IMR-90 (cell line): ENCODE measurements at regions of chr3 and their contacts with region 1.

Region 1: DNA sequence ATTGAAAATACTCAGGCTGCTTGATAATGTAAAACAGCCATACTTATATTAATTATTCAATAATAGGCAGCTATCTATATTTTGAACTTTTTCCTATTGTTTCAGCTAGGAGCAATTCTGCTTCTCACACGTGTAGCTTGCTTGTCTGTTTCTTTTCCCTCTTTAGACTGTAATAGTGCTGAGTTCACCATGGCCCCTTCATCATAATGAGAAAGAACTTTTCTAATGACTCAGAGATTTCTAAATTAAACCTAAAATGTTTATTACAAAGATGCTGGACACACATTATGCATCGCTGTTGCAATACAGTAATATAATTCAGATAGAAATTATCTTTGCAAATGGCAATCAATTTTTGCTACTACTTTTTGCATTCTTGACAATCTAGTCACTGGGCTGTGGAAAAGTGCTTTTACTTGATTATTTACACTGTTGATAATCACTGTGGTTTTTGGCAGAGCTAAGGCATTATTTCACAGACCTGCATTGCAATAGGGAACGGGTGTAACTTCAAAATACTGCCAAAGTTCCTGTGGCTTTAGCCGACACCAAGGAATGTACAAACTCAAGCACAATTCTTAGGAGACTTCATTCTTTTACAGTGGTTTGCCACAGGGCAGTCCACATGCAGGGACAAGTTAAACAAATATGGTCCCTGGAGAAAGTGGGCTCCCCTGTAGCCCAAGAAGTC is 281.0 kb upstream of the TBL1XR1 start:
- DNase-seq: peak; percentile 100
- ATAC-seq: peak; percentile 91
- H3K4me3 ChIP-seq: no peak overlapping the region
- H3K27ac ChIP-seq: peak overlapping the region; percentile 79; the same call in 1 of the 2 replicates
- H3K4me1 ChIP-seq: peaks cover 8% of the 10 kb centered on the region
- H3K27me3 ChIP-seq: no peaks in the 10 kb centered on the region
- CTCF ChIP-seq: no peak
- POLR2A ChIP-seq: no peak
- RAD21 ChIP-seq: peak; percentile 41

Region 2: GRCh38 chr3:177144923-177145780 is 333.2 kb before region 1 on chr3:
- CTCF ChIA-PET with region 1: no interaction called
- POLR2A ChIA-PET with region 1: no interaction called
- dilution Hi-C with region 1: no loop called
- in situ Hi-C with region 1: no loop called
- intact Hi-C with region 1: no loop called
- DNase-seq: no peak
- ATAC-seq: no peak
- H3K4me3 ChIP-seq: no peak overlapping the region
- H3K27ac ChIP-seq: no peak overlapping the region
- H3K4me1 ChIP-seq: peaks cover 6% of the 10 kb centered on the region
- H3K27me3 ChIP-seq: no peaks in the 10 kb centered on the region
- CTCF ChIP-seq: no peak
- POLR2A ChIP-seq: no peak
- RAD21 ChIP-seq: no peak

Region 3: DNA sequence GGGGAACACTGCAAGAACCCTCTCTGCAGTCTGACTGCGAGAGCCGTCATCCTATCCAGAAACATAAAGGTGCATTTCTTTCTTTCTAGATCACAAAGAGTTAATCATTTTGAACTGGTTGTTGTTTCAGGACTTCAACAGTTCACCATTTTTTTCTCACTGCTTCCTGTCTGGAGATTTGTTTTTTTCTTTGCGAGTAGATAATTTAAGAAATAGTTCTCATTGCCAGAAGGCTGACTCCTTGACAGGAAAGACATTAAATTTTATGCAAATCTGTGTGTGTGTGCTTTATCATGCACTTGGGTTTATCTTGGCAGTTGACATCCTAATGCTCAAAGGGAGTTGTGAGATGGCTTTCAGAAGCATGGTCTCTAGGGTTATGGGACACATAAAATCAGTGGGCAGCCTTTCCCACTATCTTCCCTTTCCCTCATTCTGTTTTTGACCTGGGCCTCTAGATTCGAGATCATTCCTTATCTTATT is 157.5 kb before region 1 on chr3:
- CTCF ChIA-PET with region 1: no interaction called
- POLR2A ChIA-PET with region 1: no interaction called
- dilution Hi-C with region 1: no loop called
- in situ Hi-C with region 1: no loop called
- intact Hi-C with region 1: no loop called
- DNase-seq: no peak
- ATAC-seq: no peak
- H3K4me3 ChIP-seq: no peak overlapping the region
- H3K27ac ChIP-seq: no peak overlapping the region
- H3K4me1 ChIP-seq: peaks cover 4% of the 10 kb centered on the region
- H3K27me3 ChIP-seq: no peaks in the 10 kb centered on the region
- CTCF ChIP-seq: no peak
- POLR2A ChIP-seq: no peak
- RAD21 ChIP-seq: no peak

Region 4: DNA sequence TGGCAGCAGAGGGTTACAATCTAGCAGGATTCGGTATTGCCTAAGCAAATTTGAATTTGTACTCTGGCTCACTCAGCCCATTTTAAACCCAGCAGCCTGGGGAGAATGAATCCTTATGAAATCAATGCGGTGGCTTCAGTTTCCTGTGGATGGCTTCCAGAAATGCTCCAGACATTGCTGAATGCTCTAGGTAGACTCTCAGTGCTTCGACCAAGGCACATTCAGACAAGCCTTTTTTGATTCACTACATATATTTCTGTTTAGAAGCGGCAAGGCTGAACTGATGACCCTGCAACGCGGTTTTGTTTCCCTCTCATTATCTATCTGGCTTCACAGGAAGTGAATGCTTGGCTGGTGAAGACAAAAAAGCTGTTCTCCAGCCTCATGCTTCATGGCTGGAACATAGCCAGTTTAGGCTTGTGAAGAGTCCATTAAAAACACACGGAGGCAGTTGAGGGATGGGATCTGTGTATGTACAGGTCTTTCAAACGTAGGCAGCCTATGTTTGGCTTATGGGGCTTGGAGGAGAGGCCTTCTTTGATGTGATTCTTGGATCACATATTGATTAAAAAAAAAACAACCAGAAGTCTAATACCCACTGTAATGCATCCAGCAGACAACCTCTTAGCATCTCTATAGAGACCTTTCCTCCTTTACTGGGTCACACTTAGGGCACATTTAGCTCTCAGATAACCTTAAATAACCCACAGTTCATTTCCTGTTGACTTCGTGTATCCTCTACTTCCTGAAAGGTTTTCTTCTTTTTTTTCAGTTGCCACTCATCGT is 119.2 kb after region 1 on chr3:
- CTCF ChIA-PET with region 1: no interaction called
- POLR2A ChIA-PET with region 1: no interaction called
- dilution Hi-C with region 1: no loop called
- in situ Hi-C with region 1: no loop called
- intact Hi-C with region 1: loop called (anchors 5 kb)
- DNase-seq: peak; percentile 75
- ATAC-seq: peak; percentile 58
- H3K4me3 ChIP-seq: no peak overlapping the region
- H3K27ac ChIP-seq: peak overlapping the region; percentile 30
- H3K4me1 ChIP-seq: peaks cover 12% of the 10 kb centered on the region
- H3K27me3 ChIP-seq: no peaks in the 10 kb centered on the region
- CTCF ChIP-seq: no peak
- POLR2A ChIP-seq: no peak
- RAD21 ChIP-seq: no peak

Region 5: GRCh38 chr3:177694316-177694715 is 216.0 kb after region 1 on chr3:
- CTCF ChIA-PET with region 1: no interaction called
- POLR2A ChIA-PET with region 1: no interaction called
- dilution Hi-C with region 1: no loop called
- in situ Hi-C with region 1: no loop called
- intact Hi-C with region 1: no loop called
- DNase-seq: peak; percentile 71
- ATAC-seq: peak; percentile 81
- H3K4me3 ChIP-seq: no peak overlapping the region
- H3K27ac ChIP-seq: no peak overlapping the region
- H3K4me1 ChIP-seq: peaks cover 7% of the 10 kb centered on the region
- H3K27me3 ChIP-seq: no peaks in the 10 kb centered on the region
- CTCF ChIP-seq: no peak
- POLR2A ChIP-seq: no peak
- RAD21 ChIP-seq: no peak

Region 6: DNA sequence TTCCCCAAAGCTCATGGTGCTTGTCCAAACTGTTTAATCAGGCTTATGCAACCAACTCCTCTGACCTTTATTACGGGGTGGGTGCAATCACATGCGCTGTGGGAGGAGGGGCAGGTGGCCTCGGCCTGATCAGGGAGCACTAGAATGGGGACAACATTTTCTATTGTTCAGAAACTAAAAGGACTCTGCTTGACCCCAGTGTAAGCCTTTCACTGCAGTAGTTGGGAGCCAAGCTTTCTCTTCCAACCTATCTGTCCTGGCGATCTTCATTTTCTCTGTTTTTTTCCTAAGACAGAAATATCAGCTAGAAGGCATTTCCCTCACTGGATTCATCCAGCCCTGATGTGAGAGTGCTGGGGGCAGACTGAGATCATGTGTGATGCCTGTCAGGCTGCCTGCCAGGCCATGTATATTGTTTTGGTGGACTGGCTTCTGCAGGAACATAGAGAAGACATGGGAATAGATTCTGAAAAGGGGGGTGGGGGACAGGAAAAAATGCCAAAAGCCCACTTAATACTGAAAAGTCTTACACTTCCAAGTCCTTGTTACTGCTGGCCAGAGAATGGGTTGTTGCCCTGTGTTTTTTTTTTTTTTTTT is 346.0 kb after region 1 on chr3:
- CTCF ChIA-PET with region 1: no interaction called
- POLR2A ChIA-PET with region 1: no interaction called
- dilution Hi-C with region 1: no loop called
- in situ Hi-C with region 1: no loop called
- intact Hi-C with region 1: loop called (anchors 10 kb)
- DNase-seq: peak; percentile 55
- ATAC-seq: peak; percentile 73
- H3K4me3 ChIP-seq: no peak overlapping the region
- H3K27ac ChIP-seq: peak overlapping the region; percentile 60; the same call in 1 of the 2 replicates
- H3K4me1 ChIP-seq: peaks cover 21% of the 10 kb centered on the region
- H3K27me3 ChIP-seq: no peaks in the 10 kb centered on the region
- CTCF ChIP-seq: no peak
- POLR2A ChIP-seq: no peak
- RAD21 ChIP-seq: no peak

Region 7: GRCh38 chr3:178022599-178022998 is 544.3 kb after region 1 on chr3:
- CTCF ChIA-PET with region 1: no interaction called
- POLR2A ChIA-PET with region 1: no interaction called
- dilution Hi-C with region 1: no loop called
- in situ Hi-C with region 1: no loop called
- intact Hi-C with region 1: no loop called
- DNase-seq: peak; percentile 25
- ATAC-seq: no peak
- H3K4me3 ChIP-seq: no peak overlapping the region
- H3K27ac ChIP-seq: no peak overlapping the region
- H3K4me1 ChIP-seq: no peaks in the 10 kb centered on the region
- H3K27me3 ChIP-seq: no peaks in the 10 kb centered on the region
- CTCF ChIP-seq: no peak
- POLR2A ChIP-seq: no peak
- RAD21 ChIP-seq: no peak